Aorta (tissue), 5 donors: ENCODE measurements at regions of chr15 and their contacts with region 1.

Region 1: GRCh38 chr15:44536962-44537734 is at the start of gene EIF3J:
- DNase-seq: peak; percentile 98
- ATAC-seq: peak; percentile 98
- H3K4me3 ChIP-seq: peak within 1 kb of the TSS; percentile 76 to 77
- H3K27ac ChIP-seq: peak within 1 kb of the TSS; percentile 91 to 93
- H3K4me1 ChIP-seq: peaks cover 2 to 11% of the 10 kb centered on the region in 2 donors
- H3K27me3 ChIP-seq: no peaks in the 10 kb centered on the region
- total RNA-seq, gene EIF3J: 61.7 to 65.9 TPM

Region 2: GRCh38 chr15:44426975-44427755 is 110.0 kb before region 1 on chr15 and contains the start of gene CTDSPL2:
- intact Hi-C with region 1: loop called in 1 of 2 experiments (anchors 2 kb)
- DNase-seq: peak; percentile 99
- ATAC-seq: peak; percentile 100
- H3K4me3 ChIP-seq: peak within 1 kb of the TSS; percentile 69 to 87
- H3K27ac ChIP-seq: peak within 1 kb of the TSS; percentile 38 to 76
- H3K4me1 ChIP-seq: peaks cover 0 to 2% of the 10 kb centered on the region in 2 donors
- H3K27me3 ChIP-seq: no peaks in the 10 kb centered on the region
- total RNA-seq, gene CTDSPL2: 35.9 to 43.9 TPM